ENCODE measurements at regions of chr5 and their contacts with region 1.

Region 1: DNA sequence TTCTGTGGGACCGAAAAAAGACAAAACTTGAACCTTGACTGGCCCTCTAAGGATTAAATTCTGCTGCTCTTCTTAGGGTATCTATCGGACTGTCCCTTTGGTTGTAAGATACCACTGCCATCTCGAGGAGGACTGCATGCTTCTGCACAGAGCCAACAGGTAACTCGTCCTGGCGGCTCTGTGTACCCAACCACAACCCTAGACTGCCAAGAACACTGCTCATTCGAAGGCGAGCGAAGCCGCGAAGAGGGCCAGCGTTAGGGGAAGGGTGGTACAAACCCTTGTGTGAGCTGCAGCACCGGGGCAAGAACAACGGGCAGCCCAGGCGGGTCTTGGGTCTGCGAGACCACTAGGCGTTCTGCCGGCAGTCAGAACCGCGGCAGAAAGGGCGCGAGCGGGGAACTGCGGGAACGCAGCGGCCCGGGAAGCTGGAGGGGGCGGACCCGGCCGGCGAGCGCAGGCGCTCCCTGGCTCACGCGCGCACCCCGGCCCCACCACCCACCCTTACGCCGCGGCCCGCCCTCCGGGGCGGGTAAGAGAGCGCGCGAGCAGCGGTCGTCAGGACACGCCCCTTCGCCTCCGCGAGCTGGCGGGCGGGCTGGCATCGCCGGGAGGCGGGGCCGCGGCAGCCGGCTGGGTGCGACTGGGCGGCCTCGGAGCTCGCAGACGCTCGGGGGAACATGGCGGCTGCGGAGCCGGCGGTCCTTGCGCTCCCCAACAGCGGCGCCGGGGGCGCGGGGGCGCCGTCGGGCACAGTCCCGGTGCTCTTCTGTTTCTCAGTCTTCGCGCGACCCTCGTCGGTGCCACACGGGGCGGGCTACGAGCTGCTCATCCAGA is at the start of gene ISOC1:
- DNase-seq: peak; percentile 91
- H3K4me3 ChIP-seq: peak within 1 kb of the TSS; percentile 90
- H3K27ac ChIP-seq: no peak within 1 kb of the TSS
- H3K4me1 ChIP-seq: peaks cover 12% of the 10 kb centered on the region
- CTCF ChIP-seq: no peak; the same call in 1 of the 2 replicates
- total RNA-seq, gene ISOC1: 16.7 and 17.9 TPM in 2 replicates

Region 2: DNA sequence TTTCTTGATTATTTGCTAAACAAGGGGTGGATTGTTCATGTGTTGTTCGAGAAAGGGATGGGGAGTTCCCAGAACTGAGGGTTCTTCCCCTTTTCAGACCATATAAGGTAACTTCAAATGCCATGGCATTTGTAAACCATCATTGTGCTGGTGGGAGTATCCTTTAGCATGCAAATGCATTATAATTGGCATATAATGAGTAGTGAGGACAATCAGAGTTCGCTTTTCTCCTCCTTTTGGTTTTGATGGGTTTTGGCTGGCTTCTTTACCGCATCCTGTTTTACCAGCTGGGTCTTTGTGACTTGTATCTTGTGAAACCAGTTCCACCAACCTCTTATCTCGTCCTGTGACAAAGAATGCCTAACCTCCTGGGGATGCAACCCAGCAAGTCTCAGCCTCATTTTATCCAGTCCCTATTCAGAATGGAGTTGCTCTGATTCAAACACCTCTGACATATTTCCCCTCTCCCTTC is 547.6 kb before region 1 on chr5:
- CTCF ChIA-PET with region 1: no interaction called
- POLR2A ChIA-PET with region 1: no interaction called
- intact Hi-C with region 1: no loop called
- DNase-seq: no peak
- H3K4me3 ChIP-seq: no peak overlapping the region
- H3K27ac ChIP-seq: no peak overlapping the region
- H3K4me1 ChIP-seq: no peaks in the 10 kb centered on the region
- CTCF ChIP-seq: no peak

Region 3: DNA sequence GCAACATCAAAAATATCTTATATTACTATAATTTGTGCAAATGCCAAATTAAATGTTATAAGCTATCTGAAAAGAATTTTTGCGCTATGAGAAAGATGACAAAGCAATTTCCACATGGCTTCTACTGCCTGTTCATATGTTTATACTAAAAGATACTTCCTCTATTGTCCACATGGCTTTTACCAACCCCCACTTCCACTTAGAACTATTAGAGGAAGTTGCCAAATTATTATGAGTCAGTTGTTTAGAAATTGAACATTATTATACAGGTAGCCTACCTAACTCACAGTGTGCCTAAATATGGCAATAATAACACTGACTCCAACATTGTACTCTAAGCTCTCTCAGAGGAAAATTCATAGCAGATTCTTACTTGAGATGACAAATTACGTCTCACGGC is 166.7 kb before region 1 on chr5:
- CTCF ChIA-PET with region 1: no interaction called
- POLR2A ChIA-PET with region 1: no interaction called
- intact Hi-C with region 1: no loop called
- DNase-seq: no peak
- H3K4me3 ChIP-seq: no peak overlapping the region
- H3K27ac ChIP-seq: no peak overlapping the region
- H3K4me1 ChIP-seq: no peaks in the 10 kb centered on the region
- CTCF ChIP-seq: no peak

Region 4: GRCh38 chr5:129053438-129053837 is 40.9 kb before region 1 on chr5:
- CTCF ChIA-PET with region 1: no interaction called
- POLR2A ChIA-PET with region 1: no interaction called
- intact Hi-C with region 1: no loop called
- DNase-seq: no peak
- H3K4me3 ChIP-seq: no peak overlapping the region
- H3K27ac ChIP-seq: no peak overlapping the region
- H3K4me1 ChIP-seq: no peaks in the 10 kb centered on the region
- CTCF ChIP-seq: no peak

Region 5: GRCh38 chr5:129104910-129105455 is 10.7 kb after region 1 on chr5:
- CTCF ChIA-PET with region 1: no interaction called
- POLR2A ChIA-PET with region 1: interaction called, 11 read pairs
- intact Hi-C with region 1: no loop called
- DNase-seq: no peak
- H3K4me3 ChIP-seq: no peak overlapping the region
- H3K27ac ChIP-seq: no peak overlapping the region
- H3K4me1 ChIP-seq: no peaks in the 10 kb centered on the region
- CTCF ChIP-seq: no peak

Region 6: DNA sequence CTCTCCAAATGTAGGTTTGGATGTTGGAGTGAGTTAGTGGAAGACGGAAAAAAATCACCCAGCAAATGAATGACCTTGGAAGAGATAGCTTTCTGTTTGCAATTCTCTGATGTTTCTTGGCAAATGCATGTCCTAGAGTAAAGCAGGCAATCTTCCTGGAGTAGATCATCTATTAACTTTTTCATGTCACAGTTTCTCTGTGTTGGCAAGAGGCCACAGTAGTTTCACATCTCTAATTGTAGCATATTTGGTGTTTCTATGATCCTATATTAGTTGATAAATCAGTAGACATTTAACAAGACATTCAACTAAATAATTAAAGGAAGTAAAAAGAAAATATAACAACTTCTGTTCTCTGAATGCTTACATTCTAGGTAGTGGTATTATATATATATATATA is 515.4 kb after region 1 on chr5:
- CTCF ChIA-PET with region 1: no interaction called
- POLR2A ChIA-PET with region 1: no interaction called
- intact Hi-C with region 1: no loop called
- DNase-seq: no peak
- H3K4me3 ChIP-seq: no peak overlapping the region
- H3K27ac ChIP-seq: no peak overlapping the region
- H3K4me1 ChIP-seq: no peaks in the 10 kb centered on the region
- CTCF ChIP-seq: no peak

Region 7: DNA sequence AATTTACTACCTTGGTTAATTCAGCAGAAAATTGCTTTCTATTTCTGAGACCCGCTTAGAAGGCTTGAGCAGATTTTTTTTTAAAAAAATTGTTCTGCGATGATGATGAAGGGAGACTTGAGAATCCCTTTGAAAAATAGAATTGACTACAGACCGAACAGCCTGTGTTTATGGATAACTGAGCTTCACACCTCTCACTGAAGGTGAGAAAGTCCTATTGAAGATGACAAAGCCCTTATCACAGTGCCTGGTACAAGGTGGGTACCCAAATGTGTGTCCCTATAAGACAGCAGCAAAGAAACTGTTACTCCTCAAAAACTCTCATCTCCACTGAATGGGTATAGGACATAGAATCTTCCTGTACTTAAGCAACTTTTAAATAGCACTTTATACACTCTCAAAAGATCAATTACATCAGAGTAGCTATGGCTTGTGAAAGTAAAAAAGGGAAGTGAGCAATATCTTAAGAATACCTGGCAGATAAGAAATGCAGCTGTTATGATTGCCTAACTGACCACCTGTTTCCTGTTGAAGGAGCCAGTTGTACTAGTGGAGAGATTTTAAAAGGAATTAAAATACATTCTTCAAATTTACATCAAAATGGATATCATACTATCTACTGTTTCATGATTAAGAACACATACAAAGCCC is 1229.6 kb after region 1 on chr5:
- CTCF ChIA-PET with region 1: no interaction called
- POLR2A ChIA-PET with region 1: no interaction called
- intact Hi-C with region 1: loop called (anchors 10 kb)
- DNase-seq: peak; percentile 93
- H3K4me3 ChIP-seq: peak overlapping the region; percentile 41
- H3K27ac ChIP-seq: peak overlapping the region; percentile 97
- H3K4me1 ChIP-seq: peaks cover 42% of the 10 kb centered on the region
- CTCF ChIP-seq: no peak